ENCODE measurements at regions of chr1 and their contacts with region 1.

Region 1: GRCh38 chr1:208081972-208082371 is 162.2 kb downstream of the PLXNA2 start:
- DNase-seq: no peak
- ATAC-seq: no peak
- H3K4me3 ChIP-seq: no peak overlapping the region
- H3K27ac ChIP-seq: no peak overlapping the region
- H3K4me1 ChIP-seq: peaks cover 8 to 12% of the 10 kb centered on the region in 2 donors
- H3K27me3 ChIP-seq: no peaks in the 10 kb centered on the region
- CTCF ChIP-seq: peak in 1 of 5 experiments; percentile 13
- POLR2A ChIP-seq: no peak

Region 2: DNA sequence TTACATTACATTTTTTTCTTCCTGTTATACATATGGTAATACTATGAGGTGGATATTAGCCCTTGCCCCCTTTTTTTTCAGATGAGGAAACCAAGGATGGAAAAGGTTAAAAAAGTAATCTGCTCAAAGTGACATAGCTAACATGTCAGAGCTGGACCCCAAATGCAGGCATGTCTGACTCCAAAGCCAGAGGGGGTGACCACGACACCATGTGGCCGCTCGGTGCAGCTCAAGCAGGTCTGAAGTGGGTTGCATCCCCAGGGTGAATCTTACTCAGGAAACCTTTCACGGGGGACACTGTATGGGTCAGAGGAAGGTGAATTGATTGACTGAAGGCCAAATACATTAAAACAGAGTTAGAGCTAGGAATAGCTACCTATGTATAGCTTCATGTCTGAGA is 205.8 kb before region 1 on chr1:
- in situ Hi-C with region 1: no loop called
- intact Hi-C with region 1: no loop called
- DNase-seq: no peak
- ATAC-seq: no peak
- H3K4me3 ChIP-seq: no peak overlapping the region
- H3K27ac ChIP-seq: no peak overlapping the region
- H3K4me1 ChIP-seq: peaks cover 0 to 10% of the 10 kb centered on the region in 2 donors
- H3K27me3 ChIP-seq: no peaks in the 10 kb centered on the region
- CTCF ChIP-seq: no peak
- POLR2A ChIP-seq: no peak

Region 3: DNA sequence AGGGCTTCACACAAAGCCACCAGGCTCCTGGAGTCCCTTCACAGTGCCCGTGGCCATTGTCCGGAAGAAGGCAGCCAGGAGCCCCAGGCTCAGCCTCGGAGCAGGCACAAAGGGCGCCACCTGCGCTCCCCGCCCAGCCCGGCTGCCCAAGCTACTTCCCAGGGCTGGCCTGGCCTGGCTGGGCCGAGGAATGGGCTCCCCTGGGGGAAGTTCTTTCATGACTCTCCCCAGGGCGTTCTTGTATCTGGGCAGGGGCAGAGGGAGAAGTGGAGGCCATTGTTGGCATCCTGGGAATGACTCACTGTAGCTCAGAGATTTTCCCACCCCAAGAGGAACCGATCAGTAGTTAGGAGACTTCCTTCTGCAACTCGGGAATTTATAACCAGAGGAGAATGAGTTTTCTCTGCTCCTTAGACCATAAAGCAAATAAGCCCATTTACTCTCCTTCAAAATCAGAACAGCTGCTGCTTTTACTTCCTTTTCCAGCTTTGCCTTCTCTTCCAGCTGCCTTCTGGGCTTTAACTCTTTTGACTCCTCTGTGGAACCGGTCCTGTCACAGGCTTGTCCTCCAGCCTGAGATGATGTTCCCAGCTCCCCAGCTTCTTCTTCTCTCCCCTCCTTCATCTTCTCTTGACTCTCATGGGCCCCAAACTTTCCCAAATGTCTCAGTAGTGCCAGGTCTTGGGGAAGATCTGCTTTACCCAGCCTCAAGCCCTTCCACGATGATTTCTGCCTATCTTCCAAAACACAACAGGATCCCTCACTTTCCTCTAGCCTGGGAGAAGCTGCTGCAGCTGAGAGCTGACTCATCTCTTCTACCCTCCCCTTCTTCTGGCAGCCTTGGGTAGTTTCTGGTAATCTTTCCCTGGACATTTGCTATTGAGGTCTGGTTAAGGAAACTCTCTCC is 52.3 kb before region 1 on chr1:
- in situ Hi-C with region 1: loop called in 1 of 4 experiments (anchors 10 kb)
- intact Hi-C with region 1: no loop called
- DNase-seq: no peak
- ATAC-seq: peak; percentile 40 to 59
- H3K4me3 ChIP-seq: no peak overlapping the region
- H3K27ac ChIP-seq: peak overlapping the region; percentile 41 to 65 (median 60)
- H3K4me1 ChIP-seq: peaks cover 16 to 24% of the 10 kb centered on the region in 2 donors
- H3K27me3 ChIP-seq: no peaks in the 10 kb centered on the region
- CTCF ChIP-seq: no peak
- POLR2A ChIP-seq: no peak

Region 4: GRCh38 chr1:208054485-208054884 is 27.5 kb before region 1 on chr1:
- in situ Hi-C with region 1: no loop called
- intact Hi-C with region 1: loop called (anchors 5 kb)
- DNase-seq: no peak
- ATAC-seq: no peak
- H3K4me3 ChIP-seq: no peak overlapping the region
- H3K27ac ChIP-seq: no peak overlapping the region
- H3K4me1 ChIP-seq: no peaks in the 10 kb centered on the region
- H3K27me3 ChIP-seq: no peaks in the 10 kb centered on the region
- CTCF ChIP-seq: no peak
- POLR2A ChIP-seq: no peak

Region 5: GRCh38 chr1:208137193-208137592 is 55.2 kb after region 1 on chr1:
- in situ Hi-C with region 1: no loop called
- intact Hi-C with region 1: no loop called
- DNase-seq: no peak
- ATAC-seq: peak in 1 of 2 donors; percentile 30
- H3K4me3 ChIP-seq: no peak overlapping the region
- H3K27ac ChIP-seq: peak overlapping the region; percentile 71 to 86 (median 80)
- H3K4me1 ChIP-seq: peaks cover 61 to 73% of the 10 kb centered on the region in 2 donors
- H3K27me3 ChIP-seq: no peaks in the 10 kb centered on the region
- CTCF ChIP-seq: no peak
- POLR2A ChIP-seq: no peak